AG04449 (cell line): ENCODE measurements at regions of chr3 and their contacts with region 1.

Region 1: GRCh38 chr3:158790901-158791589 is 10.8 kb upstream of the MFSD1 start:
- DNase-seq: no peak
- H3K4me3 ChIP-seq: no peak overlapping the region
- CTCF ChIP-seq: peak; percentile 67

Region 2: GRCh38 chr3:158644345-158644908 is 146.6 kb before region 1 on chr3 and contains the start of gene GFM1:
- CTCF ChIA-PET with region 1: interaction called, 41 read pairs
- POLR2A ChIA-PET with region 1: no interaction called
- DNase-seq: peak; percentile 75
- H3K4me3 ChIP-seq: peak within 1 kb of the TSS; percentile 95
- CTCF ChIP-seq: peak; percentile 94

Region 3: GRCh38 chr3:158672293-158673176 is 118.5 kb before region 1 on chr3 and contains the start of gene LXN:
- CTCF ChIA-PET with region 1: interaction called, 71 read pairs
- POLR2A ChIA-PET with region 1: no interaction called
- DNase-seq: peak; percentile 33
- H3K4me3 ChIP-seq: peak within 1 kb of the TSS; percentile 71
- CTCF ChIP-seq: peak; percentile 96

Region 4: GRCh38 chr3:158713094-158713499 is 77.9 kb before region 1 on chr3:
- CTCF ChIA-PET with region 1: interaction called, 16 read pairs
- POLR2A ChIA-PET with region 1: no interaction called
- DNase-seq: no peak
- H3K4me3 ChIP-seq: no peak overlapping the region
- CTCF ChIP-seq: no peak

Region 5: DNA sequence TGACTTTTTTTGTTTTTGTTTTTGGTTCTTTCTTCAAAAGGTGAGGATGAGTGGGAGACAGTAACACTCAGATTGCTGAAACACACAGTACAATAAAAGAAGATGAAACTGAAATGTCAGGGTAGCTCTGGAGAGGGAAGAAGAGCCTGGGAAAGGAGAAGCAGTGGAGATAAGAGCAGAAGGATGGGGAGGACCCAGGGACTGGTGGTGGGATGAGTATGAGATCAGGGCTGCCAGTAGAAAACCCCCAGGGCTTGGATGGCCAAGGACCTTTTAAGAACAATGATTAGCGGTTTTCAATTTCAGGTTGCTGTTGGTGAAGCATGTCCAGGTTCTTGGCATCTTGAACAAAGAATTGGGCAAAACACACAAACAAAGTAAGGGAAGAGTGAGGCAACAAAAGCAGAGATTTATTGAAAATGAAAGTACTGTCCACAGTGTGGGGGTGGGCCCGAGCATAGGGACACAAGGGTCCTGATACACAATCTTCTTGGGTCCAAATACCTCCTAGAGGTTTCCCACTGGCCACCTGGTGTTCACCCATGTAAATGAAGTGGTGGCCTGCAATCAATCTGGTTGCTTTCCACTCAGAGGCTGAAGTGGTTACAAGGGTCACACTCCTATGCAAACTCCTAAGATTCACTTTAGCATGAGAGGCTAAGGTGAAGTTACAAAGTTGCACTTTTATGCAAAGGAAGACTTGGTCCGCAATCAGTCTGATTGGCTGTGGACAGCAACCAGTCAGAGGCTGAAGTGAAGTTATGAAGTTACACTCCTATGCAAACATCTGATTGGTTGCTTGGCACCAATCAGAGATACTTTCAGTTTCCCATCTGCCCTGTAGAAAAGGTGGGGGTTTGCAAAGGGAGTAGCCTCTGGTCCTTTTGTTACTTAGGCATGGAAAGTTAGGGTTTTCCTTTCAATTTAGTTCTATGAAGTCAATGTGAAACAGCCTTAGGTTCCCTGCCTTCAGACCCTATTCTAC is 15.3 kb before region 1 on chr3:
- CTCF ChIA-PET with region 1: interaction called, 39 read pairs
- POLR2A ChIA-PET with region 1: no interaction called
- DNase-seq: no peak
- H3K4me3 ChIP-seq: no peak overlapping the region
- CTCF ChIP-seq: no peak

Region 6: GRCh38 chr3:159260049-159260662 is 469.1 kb after region 1 on chr3:
- CTCF ChIA-PET with region 1: interaction called, 25 read pairs
- POLR2A ChIA-PET with region 1: no interaction called
- DNase-seq: peak; percentile 69
- H3K4me3 ChIP-seq: no peak overlapping the region
- CTCF ChIP-seq: peak; percentile 54